Gastrocnemius medialis (tissue), 4 donors: ENCODE measurements at regions of chr10 and their contacts with region 1.

Region 1: DNA sequence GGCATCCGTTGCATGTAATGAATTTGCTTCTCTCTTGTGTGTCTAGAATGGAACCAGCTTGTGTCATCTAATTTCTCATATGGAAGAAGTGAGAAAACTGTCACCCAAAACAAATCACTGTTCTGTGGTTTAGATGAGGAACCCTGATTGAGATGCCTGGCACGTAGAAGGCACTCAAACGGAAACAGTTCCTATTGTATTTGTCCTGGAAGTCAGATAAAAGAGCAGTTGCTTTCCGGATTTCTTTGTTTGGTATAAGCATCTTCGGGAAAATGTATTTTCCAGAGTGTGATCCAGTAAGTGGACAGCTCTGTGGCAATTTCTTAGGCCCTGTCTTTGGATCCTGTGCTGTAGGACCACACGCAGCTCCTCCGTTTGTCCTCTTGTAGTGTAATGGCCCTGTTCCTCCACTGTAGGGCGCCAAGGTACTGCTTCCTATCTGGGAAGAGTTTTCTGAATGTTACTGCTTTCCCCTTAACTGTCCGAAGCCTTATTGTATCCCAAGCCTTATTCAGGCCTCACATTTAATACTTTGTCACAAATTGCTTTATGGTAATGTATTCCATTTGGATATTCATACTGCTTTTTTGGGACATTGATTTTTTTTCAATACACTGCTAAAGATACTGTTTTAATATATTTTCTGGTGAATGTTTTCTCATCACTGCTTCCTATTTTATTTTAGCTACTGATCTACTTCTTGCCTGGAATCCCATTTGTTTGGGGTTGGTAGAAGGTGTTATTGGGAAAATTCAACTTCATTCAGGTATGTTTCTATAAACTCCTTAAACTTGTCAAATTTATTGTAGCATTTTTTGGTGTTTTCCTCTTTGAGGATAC is 24.8 kb downstream of the INPP5F start:
- DNase-seq: peak; percentile 42 to 62
- ATAC-seq: peak; percentile 94 to 99
- H3K4me3 ChIP-seq: no peak overlapping the region
- H3K27ac ChIP-seq: no peak overlapping the region
- H3K4me1 ChIP-seq: peaks cover 7% of the 10 kb centered on the region in 2 donors
- H3K27me3 ChIP-seq: no peaks in the 10 kb centered on the region
- CTCF ChIP-seq: peak; percentile 70 to 93 (median 83)
- POLR2A ChIP-seq: no peak

Region 2: DNA sequence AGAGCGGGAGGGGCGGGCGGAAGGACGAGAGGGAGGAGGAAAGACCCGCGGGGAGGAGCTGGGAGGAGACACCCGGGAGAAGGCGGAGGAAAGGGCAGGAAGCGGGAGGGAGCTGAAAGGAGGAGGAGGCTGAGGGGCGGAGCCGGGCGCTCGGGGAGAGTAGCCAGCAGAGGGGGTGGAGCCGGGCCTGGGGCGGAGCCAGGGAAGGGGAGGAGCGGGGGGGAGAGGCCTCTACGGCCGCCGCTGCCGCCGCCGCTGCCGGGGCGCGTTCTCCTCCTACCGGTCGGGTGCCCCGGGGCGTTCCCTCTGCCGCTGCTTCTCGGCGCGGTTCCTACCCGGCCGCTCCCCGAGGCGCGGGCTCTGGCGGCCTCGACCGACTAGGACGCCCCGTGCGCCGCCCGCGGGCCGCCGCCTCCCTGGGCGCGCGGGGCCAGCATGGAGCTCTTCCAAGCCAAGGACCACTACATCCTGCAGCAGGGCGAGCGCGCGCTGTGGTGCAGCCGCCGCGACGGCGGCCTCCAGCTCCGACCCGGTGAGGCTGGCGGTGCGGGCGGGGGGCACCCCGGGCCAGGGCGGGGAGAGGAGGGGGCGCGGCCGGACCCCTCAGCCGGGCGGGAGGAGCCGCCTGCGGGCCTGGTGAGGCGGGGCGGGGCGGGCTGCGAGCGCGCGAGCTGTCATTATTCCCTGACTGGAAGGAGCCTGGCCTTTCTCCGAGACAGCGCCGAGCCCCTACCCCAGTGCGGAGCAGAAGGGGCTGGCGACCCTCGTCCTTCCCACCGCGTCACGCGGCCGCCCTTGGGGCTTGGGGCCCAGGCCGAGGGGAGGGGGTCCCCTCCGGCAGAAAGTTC is 24.6 kb before region 1 on chr10 and contains the start of gene INPP5F:
- in situ Hi-C with region 1: no loop called
- intact Hi-C with region 1: no loop called
- DNase-seq: peak; percentile 99
- ATAC-seq: peak; percentile 94 to 96
- H3K4me3 ChIP-seq: peak within 1 kb of the TSS; percentile 74 to 93 (median 82)
- H3K27ac ChIP-seq: peak within 1 kb of the TSS; percentile 92 to 96 (median 94)
- H3K4me1 ChIP-seq: peaks cover 18 to 26% of the 10 kb centered on the region in 2 donors
- H3K27me3 ChIP-seq: no peaks in the 10 kb centered on the region
- CTCF ChIP-seq: peak; percentile 28 to 56 (median 41)
- POLR2A ChIP-seq: peak; percentile 75 to 77
- total RNA-seq, gene INPP5F: 8.7 to 11.6 (median 10.5) TPM

Region 3: DNA sequence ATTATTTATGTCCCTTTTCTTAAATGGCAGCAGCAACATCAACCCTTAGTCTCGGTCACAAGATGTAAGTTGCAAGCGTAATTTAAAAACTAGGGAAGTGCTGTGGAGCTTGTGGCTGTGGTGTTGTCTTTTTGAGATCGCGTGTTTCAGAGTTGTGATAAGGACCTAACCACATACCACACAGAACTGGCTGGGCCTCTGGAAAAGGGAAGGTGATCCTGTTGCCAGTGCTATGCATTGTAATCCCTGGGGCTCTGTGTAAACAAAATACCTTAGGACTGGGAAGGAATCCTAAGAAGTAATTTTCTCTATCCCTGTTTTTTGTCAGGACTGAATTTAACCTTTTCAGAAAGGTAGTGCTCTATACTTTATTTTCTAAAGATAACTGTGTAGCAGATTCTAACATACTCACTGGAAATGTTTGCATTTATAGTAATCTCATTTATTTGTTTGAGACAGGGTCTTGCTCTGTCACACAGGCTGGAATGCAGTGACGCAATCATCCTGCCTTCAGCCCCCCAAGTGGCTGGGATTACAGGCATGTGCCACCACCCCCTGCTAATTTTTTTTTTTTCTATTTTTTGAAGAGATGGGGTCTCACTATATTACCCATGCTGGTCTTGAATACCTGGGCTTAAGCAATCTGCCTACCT is 35.6 kb after region 1 on chr10:
- in situ Hi-C with region 1: no loop called
- intact Hi-C with region 1: loop called (anchors 1 kb)
- DNase-seq: no peak
- ATAC-seq: no peak
- H3K4me3 ChIP-seq: no peak overlapping the region
- H3K27ac ChIP-seq: no peak overlapping the region
- H3K4me1 ChIP-seq: peaks cover 13 to 14% of the 10 kb centered on the region in 2 donors
- H3K27me3 ChIP-seq: no peaks in the 10 kb centered on the region
- CTCF ChIP-seq: no peak
- POLR2A ChIP-seq: no peak

Region 4: GRCh38 chr10:119859420-119860258 is 109.0 kb after region 1 on chr10:
- in situ Hi-C with region 1: loop called in 3 of 4 experiments (anchors 5 to 10 kb)
- intact Hi-C with region 1: loop called (anchors 1 kb)
- DNase-seq: no peak
- ATAC-seq: no peak
- H3K4me3 ChIP-seq: no peak overlapping the region
- H3K27ac ChIP-seq: no peak overlapping the region
- H3K4me1 ChIP-seq: peaks cover 7 to 10% of the 10 kb centered on the region in 2 donors
- H3K27me3 ChIP-seq: no peaks in the 10 kb centered on the region
- CTCF ChIP-seq: peak; percentile 41 to 71 (median 59)
- POLR2A ChIP-seq: no peak

Region 5: DNA sequence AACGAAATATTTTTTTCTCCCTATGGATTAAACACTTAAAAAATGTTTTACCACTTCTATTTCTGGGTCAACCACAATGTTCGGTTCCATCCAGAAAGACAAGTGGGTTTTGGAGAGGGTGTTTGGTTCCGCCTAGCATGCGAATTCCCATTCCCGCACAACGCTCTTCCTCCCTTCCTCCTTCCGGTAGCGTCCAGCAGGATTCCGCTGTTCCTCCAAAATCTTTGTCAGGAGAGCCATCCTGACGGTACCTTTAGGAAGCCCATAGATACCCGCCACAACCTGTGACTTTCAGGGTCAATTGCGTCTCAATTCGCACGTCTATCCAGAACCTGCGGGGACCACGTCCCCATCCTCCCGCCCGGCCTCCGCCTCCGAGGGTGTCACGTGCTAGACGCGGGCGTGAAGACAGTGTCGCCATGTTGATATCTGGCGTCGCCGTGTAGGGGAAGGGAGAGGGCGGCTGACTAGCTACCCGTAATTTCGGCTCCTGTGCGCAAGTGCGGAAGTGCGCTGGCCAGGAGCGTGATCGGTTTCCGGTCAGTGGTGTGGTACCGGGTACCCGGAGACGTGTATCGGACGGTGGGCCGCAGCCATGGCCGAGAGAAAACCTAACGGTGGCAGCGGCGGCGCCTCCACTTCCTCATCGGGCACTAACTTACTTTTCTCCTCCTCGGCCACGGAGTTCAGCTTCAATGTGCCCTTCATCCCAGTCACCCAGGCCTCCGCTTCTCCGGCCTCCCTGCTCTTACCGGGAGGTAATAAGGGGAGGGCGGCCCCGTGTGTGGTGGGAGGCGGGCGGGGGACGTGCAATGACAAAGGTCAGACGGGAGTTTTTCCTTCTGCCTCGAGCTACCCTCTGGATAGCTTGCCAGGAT is 141.8 kb after region 1 on chr10 and contains the start of gene SEC23IP:
- in situ Hi-C with region 1: no loop called
- intact Hi-C with region 1: loop called (anchors 1 kb)
- DNase-seq: peak; percentile 94 to 96
- ATAC-seq: peak; percentile 100
- H3K4me3 ChIP-seq: peak within 1 kb of the TSS; percentile 85 to 100 (median 98)
- H3K27ac ChIP-seq: peak within 1 kb of the TSS; percentile 88 to 97 (median 94)
- H3K4me1 ChIP-seq: peaks cover 33 to 34% of the 10 kb centered on the region in 2 donors
- H3K27me3 ChIP-seq: no peaks in the 10 kb centered on the region
- CTCF ChIP-seq: peak in 2 of 5 experiments; percentile 8 to 18
- POLR2A ChIP-seq: peak; percentile 75 to 90
- total RNA-seq, gene SEC23IP: 12.6 to 28.6 (median 21.6) TPM